HCT116 (cell line): ENCODE measurements at regions of chr3 and their contacts with region 1.

Region 1: DNA sequence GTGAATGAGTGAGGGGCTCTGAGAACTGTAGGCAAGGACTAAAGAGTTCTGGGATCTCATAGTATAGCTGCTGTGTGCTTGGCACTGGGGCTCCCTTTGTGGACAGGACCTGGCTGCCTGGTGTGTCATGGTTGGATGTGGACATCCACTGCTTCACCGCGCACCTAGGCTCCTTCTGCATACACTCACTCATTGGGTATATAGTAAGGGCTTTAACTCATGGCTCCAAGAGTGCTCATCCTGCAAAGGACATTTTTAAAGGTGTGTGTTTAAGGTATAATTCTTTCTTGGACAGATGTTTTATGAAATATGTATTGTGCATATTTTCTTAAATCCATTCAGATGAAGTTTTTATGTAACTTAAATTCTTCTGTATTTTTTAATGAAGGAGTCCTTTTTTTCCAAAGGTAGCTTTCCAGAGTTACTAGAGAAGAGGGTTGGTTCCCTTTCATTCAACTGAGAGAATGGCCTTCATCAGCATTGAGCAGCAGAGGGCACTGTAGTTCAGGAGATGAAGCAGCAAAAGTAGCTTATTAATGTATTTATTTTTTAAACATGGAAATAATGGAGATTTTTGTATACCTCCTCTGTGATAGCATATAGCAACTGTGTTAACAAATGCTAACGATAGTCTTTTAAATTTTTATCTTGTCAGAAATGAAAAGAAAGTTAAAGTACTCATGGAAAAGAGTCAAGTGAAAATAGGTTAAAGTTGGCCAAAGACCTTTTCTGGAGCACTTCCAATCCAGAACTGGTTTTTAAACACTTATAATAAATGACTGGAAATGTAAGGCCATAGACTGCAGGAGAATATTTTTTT is 25.2 kb downstream of the OXNAD1 start:
- DNase-seq: peak; percentile 24
- ATAC-seq: peak; percentile 75
- H3K4me3 ChIP-seq: no peak overlapping the region
- H3K27ac ChIP-seq: no peak overlapping the region
- H3K4me1 ChIP-seq: no peaks in the 10 kb centered on the region
- H3K27me3 ChIP-seq: no peaks in the 10 kb centered on the region
- CTCF ChIP-seq: peak; percentile 66 to 74 (median 72); a peak in 5 of 6 replicates
- POLR2A ChIP-seq: no peak
- RAD21 ChIP-seq: peak; percentile 87

Region 2: GRCh38 chr3:15659254-15659975 is 630.8 kb before region 1 on chr3:
- CTCF ChIA-PET with region 1: no interaction called
- POLR2A ChIA-PET with region 1: no interaction called
- RAD21 ChIA-PET with region 1: no interaction called
- intact Hi-C with region 1: no loop called
- DNase-seq: no peak
- ATAC-seq: no peak
- H3K4me3 ChIP-seq: no peak overlapping the region
- H3K27ac ChIP-seq: no peak overlapping the region
- H3K4me1 ChIP-seq: 0 out of 4 replicates have a peak, but pooled peaks cover 0 to 5% of the 10 kb centered on the region in 2 experiments
- H3K27me3 ChIP-seq: no peaks in the 10 kb centered on the region
- CTCF ChIP-seq: no peak
- POLR2A ChIP-seq: no peak
- RAD21 ChIP-seq: no peak

Region 3: GRCh38 chr3:16319307-16319706 is 29.1 kb after region 1 on chr3:
- CTCF ChIA-PET with region 1: interaction called, 13 read pairs
- POLR2A ChIA-PET with region 1: no interaction called
- RAD21 ChIA-PET with region 1: no interaction called
- intact Hi-C with region 1: loop called (anchors 1 kb)
- DNase-seq: peak; percentile 13
- ATAC-seq: peak; percentile 89
- H3K4me3 ChIP-seq: no peak overlapping the region
- H3K27ac ChIP-seq: no peak overlapping the region
- H3K4me1 ChIP-seq: no peaks in the 10 kb centered on the region
- H3K27me3 ChIP-seq: no peaks in the 10 kb centered on the region
- CTCF ChIP-seq: peak; percentile 31 to 72 (median 65); a peak in 5 of 6 replicates
- POLR2A ChIP-seq: no peak
- RAD21 ChIP-seq: peak; percentile 40

Region 4: DNA sequence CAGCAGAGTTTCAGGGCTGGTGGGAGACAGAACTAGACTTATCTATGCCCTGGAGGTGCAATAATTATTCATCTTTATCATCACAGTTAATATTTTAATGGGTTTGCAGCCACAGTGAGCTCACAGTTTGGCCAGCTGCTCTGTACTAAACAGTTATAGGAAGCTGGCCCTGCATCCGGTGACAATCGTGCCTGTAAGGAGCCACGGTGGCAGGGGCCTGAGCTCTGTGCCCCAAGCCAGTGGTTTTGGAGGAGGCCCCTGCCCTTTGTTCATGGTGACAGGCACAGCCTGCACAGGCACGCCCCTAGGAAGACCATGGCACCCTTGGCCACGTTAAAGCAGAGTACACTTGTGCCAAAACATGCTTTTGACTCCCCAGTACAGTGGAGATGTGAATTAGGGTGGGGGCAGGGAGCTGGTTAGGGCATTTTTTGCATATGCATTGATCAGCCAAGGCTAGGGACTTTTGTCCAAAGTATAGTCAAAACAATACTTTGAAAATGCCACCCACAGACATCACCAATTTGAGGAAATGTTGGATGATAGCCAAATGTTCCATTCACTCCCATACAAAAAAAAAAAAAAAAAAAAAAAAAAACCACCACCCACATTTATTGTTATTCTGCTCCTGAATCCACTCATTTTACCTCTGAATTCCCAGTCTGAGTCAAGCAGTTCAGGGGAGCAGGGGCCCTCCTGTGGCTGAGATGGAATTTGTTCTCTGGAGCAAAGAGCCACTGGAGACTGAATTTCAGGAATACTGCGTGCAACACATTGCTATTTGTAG is 226.7 kb after region 1 on chr3:
- CTCF ChIA-PET with region 1: interaction called, 9 read pairs
- POLR2A ChIA-PET with region 1: no interaction called
- RAD21 ChIA-PET with region 1: interaction called, 4 read pairs
- intact Hi-C with region 1: loop called (anchors 1 kb)
- DNase-seq: no peak
- ATAC-seq: peak; percentile 36; the same call in 1 of the 2 replicates
- H3K4me3 ChIP-seq: no peak overlapping the region
- H3K27ac ChIP-seq: no peak overlapping the region
- H3K4me1 ChIP-seq: peaks cover 0 to 12% of the 10 kb centered on the region in 2 experiments; a peak in 2 of 4 replicates
- H3K27me3 ChIP-seq: peaks cover 22% of the 10 kb centered on the region; the same call in 1 of the 2 replicates
- CTCF ChIP-seq: peak; percentile 36 to 39 (median 39); a peak in 4 of 6 replicates
- POLR2A ChIP-seq: no peak
- RAD21 ChIP-seq: peak; percentile 63

Region 5: GRCh38 chr3:17233398-17233800 is 943.2 kb after region 1 on chr3:
- CTCF ChIA-PET with region 1: no interaction called
- POLR2A ChIA-PET with region 1: no interaction called
- RAD21 ChIA-PET with region 1: no interaction called
- intact Hi-C with region 1: loop called (anchors 1 kb)
- DNase-seq: peak; percentile 52
- ATAC-seq: peak; percentile 99
- H3K4me3 ChIP-seq: no peak overlapping the region
- H3K27ac ChIP-seq: no peak overlapping the region
- H3K4me1 ChIP-seq: no peaks in the 10 kb centered on the region
- H3K27me3 ChIP-seq: no peaks in the 10 kb centered on the region
- CTCF ChIP-seq: peak; percentile 59 to 79 (median 75)
- POLR2A ChIP-seq: no peak
- RAD21 ChIP-seq: peak; percentile 85